GM10248 (cell line): ENCODE measurements at regions of chr12 and their contacts with region 1.

Region 1: DNA sequence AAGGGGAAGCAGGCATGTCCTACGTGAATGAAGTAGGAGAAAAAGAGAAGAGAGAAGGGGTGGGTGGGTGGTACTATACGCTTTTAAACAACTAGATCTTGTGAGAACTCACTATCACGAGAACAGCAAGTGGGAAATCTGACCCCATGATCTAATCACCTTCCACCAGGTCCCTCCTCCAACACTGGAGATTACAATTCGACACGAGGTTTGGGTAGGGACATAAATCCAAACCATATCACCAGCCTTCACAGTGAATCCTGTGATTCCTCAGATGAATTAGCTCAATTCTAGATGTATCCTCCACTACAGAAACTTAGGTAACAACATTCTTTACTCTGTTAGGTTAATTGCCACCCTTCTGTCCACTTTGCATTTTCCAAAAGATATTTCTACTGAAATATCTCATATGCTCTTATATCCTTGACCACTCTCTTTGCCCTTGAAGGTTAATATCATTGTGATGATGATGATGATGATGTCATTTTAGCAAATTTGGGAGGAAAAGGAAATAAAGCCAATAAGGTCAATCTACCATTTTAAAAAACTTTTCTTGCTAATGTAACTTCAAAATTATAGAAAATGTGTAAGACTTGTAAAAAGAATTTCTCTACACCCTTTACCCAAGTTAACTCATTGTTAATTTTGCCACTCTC is 23.2 kb upstream of the CCNT1 start:
- DNase-seq: no peak
- CTCF ChIP-seq: no peak

Region 2: DNA sequence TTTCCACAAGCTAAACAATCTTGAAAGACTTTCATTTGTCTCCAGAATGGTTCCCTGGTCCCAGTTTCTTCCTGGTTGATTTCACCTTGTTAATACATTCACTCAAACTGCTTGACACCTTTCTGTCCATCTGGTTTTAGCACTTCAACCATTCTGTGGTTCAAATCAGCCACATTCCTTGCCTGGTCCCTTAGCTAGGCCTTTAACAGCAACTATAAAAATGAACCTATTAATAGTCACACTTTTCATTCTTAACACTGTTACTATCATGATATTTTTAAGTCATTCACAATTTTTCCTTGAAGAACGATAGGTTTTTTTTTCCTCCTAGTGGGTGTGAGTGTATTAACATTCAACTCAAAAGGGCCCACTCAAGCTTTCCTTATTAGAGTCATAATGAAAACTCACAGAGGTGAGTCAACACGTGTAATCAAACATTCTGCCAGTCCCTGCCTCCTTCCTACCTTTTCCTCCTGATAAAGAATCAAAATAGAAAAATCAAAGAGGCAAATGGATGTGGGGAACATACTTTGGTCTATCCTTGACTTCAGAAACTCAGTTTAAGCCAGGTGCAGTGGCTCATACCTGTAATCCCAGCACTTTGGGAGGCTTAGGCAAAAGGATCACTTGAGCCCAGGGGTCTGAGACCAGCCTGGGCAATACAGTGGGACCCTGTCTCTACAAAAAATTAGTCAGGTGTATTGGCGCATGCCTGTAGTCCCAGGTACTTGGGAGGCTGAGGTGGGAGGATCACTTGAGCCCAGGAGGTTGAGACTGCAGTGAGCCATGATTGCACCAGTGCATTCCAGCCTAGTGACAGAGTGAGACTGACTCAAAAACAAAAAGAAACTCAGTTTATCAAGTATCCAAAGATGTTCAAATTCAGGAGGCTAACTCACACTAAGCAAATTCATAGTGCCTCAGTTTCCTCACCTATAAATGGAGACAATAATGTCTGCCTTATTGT is 11.3 kb after region 1 on chr12:
- CTCF ChIA-PET with region 1: interaction called, 26 read pairs
- POLR2A ChIA-PET with region 1: no interaction called
- DNase-seq: no peak
- CTCF ChIP-seq: no peak